ENCODE measurements at regions of chr13 and their contacts with region 1.

Region 1: GRCh38 chr13:111210544-111211469 is 95.7 kb downstream of the ARHGEF7 start:
- DNase-seq: no peak

Region 2: DNA sequence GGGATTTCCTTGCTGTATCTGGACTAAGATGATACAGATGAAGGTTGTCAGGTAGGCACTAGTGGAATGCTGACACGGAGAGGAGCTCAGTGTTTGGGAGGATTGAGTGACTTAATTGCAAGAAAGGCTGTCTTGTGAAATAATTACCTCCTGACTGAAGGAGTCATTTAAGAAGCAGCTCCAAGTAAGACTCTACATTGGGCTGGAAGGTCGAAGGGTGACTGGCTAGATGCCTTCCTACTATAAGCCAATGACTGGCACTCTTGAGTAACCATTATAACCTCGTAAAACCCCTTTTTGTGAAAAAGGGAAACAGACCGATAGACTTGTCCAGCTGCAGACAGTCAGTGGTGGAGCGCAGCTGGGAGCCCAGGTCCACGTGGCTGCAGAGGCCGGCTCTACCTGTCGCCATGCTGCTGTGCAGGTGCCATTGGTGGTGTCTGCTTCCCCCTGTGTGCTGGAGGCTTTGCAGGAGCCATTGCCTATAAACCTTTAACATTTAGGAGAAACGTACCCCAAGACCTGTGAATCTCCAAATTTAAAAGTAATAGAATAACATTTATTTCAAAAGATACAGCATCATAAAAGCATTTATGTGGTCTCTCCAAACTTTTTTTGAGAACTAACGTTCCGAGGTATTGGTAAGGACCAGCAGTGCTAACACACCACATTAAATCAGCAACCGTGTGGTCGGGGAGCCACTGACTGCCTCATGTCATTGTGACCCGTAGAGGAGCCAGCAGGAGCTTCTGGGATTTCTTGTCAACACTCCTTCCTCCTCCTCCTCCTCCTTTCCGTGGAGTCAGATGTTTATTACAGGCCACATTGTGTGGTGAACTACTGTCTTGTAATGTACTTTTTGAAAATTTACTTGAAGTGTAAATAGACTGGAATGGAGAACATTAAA is 29.2 kb after region 1 on chr13:
- intact Hi-C with region 1: loop called in 1 of 2 experiments (anchors 1 kb)
- DNase-seq: no peak

Region 3: GRCh38 chr13:111361873-111362648 is 151.3 kb after region 1 on chr13:
- intact Hi-C with region 1: no loop called
- DNase-seq: no peak